ENCODE measurements at regions of chr1 and their contacts with region 1.

Region 1: DNA sequence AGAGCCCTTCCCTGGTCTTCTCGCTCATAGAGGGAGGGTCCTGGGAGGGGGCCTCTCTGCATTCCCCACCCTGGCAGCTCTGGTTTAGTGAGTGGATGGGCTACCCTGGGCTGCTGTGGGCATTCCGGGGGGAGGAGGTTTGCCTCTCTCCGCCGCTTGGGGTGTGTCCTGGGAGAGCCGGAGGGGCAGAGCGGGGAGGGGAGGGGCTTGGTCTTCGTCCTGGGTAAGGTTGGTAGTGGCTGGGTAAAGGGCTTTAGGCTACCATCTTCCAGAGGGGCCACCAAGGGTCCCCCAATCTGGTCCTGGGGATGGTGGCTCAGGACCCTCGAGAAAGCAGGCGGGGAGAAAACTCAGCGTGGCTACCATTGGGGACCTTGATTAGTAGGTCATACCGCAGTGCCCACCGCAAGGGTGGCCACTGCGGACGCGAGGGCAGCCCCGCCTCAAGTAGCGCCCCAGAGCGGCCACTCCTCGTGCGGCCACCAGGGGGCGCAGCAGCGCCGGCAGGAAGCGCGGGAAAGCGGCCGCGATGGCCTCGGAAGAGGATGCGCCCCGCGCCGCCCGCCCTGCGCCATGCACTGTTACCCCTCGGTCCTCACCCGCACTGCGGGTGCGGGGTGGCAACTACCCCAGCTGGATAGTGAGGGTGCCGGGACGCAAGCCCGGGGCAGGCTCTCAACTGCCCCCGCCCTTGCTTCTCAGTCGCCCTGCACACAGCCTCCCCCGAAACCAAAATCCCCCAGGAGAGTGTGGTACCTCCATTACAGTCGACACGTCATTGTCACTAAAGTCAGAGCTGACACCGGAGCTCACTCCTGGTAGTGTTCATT is 44.1 kb upstream of the SLC25A33 start:
- DNase-seq: peak; percentile 44 to 72 (median 57)
- H3K4me3 ChIP-seq: peak overlapping the region; percentile 16
- H3K4me3 Mint-ChIP-seq: peak overlapping the region in 6 of 7 donors; percentile 47 to 78 (median 72)
- H3K27ac ChIP-seq: no peak overlapping the region
- H3K27ac Mint-ChIP-seq: no peak overlapping the region
- H3K4me1 ChIP-seq: no peaks in the 10 kb centered on the region
- H3K4me1 Mint-ChIP-seq: peaks cover 2 to 10% (median 7%) of the 10 kb centered on the region in 3 donors
- H3K27me3 ChIP-seq: peaks cover 4% of the 10 kb centered on the region
- H3K27me3 Mint-ChIP-seq: peaks cover 7 to 23% of the 10 kb centered on the region in 2 donors

Region 2: DNA sequence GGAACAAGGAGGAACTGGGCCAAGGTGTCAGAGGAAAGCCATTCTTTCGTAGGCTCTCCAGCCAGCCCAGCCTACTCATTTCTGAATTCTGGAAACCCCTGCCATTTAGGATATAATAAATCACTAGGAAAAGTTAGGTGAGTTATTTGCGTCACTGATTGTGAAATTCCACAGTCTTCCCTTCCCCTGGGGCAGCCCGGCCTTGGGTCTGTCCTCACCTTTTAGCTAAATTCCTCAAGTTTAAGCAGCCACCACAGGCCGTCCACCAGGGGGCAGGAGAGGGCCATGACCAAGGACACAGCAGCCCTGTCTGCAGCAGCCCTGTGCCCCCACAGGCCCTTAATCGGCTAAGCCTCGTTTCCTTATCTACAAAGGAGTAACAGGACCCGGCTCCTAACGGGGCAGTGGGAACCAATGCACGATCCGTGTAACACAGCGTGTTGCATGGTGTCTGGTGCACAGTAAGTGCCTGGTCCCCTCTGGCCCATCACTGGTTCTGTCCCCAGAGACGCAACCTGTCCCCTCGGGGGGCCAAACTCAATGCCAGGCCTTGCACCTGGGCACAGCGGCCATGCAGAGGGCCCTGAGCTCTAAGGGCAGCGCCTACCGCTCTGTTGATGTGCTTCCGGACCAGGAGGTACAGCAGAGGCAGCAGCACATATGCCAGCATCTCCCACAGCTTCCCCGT is 384.3 kb before region 1 on chr1:
- CTCF ChIA-PET with region 1: interaction called, 12 read pairs
- POLR2A ChIA-PET with region 1: no interaction called
- DNase-seq: peak; percentile 64 to 87 (median 70)
- H3K4me3 ChIP-seq: no peak overlapping the region
- H3K4me3 Mint-ChIP-seq: no peak overlapping the region
- H3K27ac ChIP-seq: no peak overlapping the region
- H3K27ac Mint-ChIP-seq: peak overlapping the region in 1 of 8 donors; percentile 57
- H3K4me1 ChIP-seq: no peaks in the 10 kb centered on the region
- H3K4me1 Mint-ChIP-seq: peaks cover 0 to 5% (median 3%) of the 10 kb centered on the region in 3 donors
- H3K27me3 ChIP-seq: no peaks in the 10 kb centered on the region
- H3K27me3 Mint-ChIP-seq: no peaks in the 10 kb centered on the region

Region 3: GRCh38 chr1:9181176-9181906 is 313.8 kb before region 1 on chr1:
- CTCF ChIA-PET with region 1: interaction called, 12 read pairs
- POLR2A ChIA-PET with region 1: no interaction called
- DNase-seq: peak; percentile 34 to 69 (median 60)
- H3K4me3 ChIP-seq: peak overlapping the region; percentile 47
- H3K4me3 Mint-ChIP-seq: peak overlapping the region; percentile 54 to 82 (median 71)
- H3K27ac ChIP-seq: no peak overlapping the region
- H3K27ac Mint-ChIP-seq: peak overlapping the region in 1 of 8 donors; percentile 51
- H3K4me1 ChIP-seq: peaks cover 6% of the 10 kb centered on the region
- H3K4me1 Mint-ChIP-seq: peaks cover 6 to 8% (median 7%) of the 10 kb centered on the region in 3 donors
- H3K27me3 ChIP-seq: peaks cover 13% of the 10 kb centered on the region
- H3K27me3 Mint-ChIP-seq: peaks cover 18 to 43% of the 10 kb centered on the region in 2 donors

Region 4: GRCh38 chr1:9267352-9267686 is 227.8 kb before region 1 on chr1:
- CTCF ChIA-PET with region 1: interaction called, 15 read pairs
- POLR2A ChIA-PET with region 1: no interaction called
- DNase-seq: no peak
- H3K4me3 ChIP-seq: no peak overlapping the region
- H3K4me3 Mint-ChIP-seq: no peak overlapping the region
- H3K27ac ChIP-seq: no peak overlapping the region
- H3K27ac Mint-ChIP-seq: no peak overlapping the region
- H3K4me1 ChIP-seq: no peaks in the 10 kb centered on the region
- H3K4me1 Mint-ChIP-seq: peaks cover 0 to 8% (median 4%) of the 10 kb centered on the region in 3 donors
- H3K27me3 ChIP-seq: no peaks in the 10 kb centered on the region
- H3K27me3 Mint-ChIP-seq: no peaks in the 10 kb centered on the region

Region 5: GRCh38 chr1:9292361-9293240 is 202.5 kb before region 1 on chr1 and contains the start of gene SPSB1:
- CTCF ChIA-PET with region 1: interaction called, 54 read pairs
- POLR2A ChIA-PET with region 1: interaction called, 3 read pairs
- DNase-seq: peak; percentile 36 to 70 (median 51)
- H3K4me3 ChIP-seq: peak within 1 kb of the TSS; percentile 66
- H3K4me3 Mint-ChIP-seq: peak within 1 kb of the TSS; percentile 64 to 87 (median 79)
- H3K27ac ChIP-seq: no peak within 1 kb of the TSS
- H3K27ac Mint-ChIP-seq: peak within 1 kb of the TSS in 2 of 8 donors; percentile 36 to 43
- H3K4me1 ChIP-seq: peaks cover 26% of the 10 kb centered on the region
- H3K4me1 Mint-ChIP-seq: peaks cover 4 to 25% (median 13%) of the 10 kb centered on the region in 3 donors
- H3K27me3 ChIP-seq: no peaks in the 10 kb centered on the region
- H3K27me3 Mint-ChIP-seq: peaks cover 0 to 2% of the 10 kb centered on the region in 2 donors
- total RNA-seq, gene SPSB1: 0.92 to 1.2 TPM

Region 6: GRCh38 chr1:9466780-9467758 is 28.1 kb before region 1 on chr1:
- CTCF ChIA-PET with region 1: no interaction called
- POLR2A ChIA-PET with region 1: no interaction called
- DNase-seq: no peak
- H3K4me3 ChIP-seq: no peak overlapping the region
- H3K4me3 Mint-ChIP-seq: no peak overlapping the region
- H3K27ac ChIP-seq: no peak overlapping the region
- H3K27ac Mint-ChIP-seq: peak overlapping the region in 2 of 8 donors; percentile 21 to 69
- H3K4me1 ChIP-seq: no peaks in the 10 kb centered on the region
- H3K4me1 Mint-ChIP-seq: no peaks in the 10 kb centered on the region
- H3K27me3 ChIP-seq: no peaks in the 10 kb centered on the region
- H3K27me3 Mint-ChIP-seq: peaks cover 8 to 39% of the 10 kb centered on the region in 2 donors

Region 7: GRCh38 chr1:9481048-9481447 is 14.1 kb before region 1 on chr1:
- CTCF ChIA-PET with region 1: interaction called, 13 read pairs
- POLR2A ChIA-PET with region 1: no interaction called
- DNase-seq: no peak
- H3K4me3 ChIP-seq: no peak overlapping the region
- H3K4me3 Mint-ChIP-seq: no peak overlapping the region
- H3K27ac ChIP-seq: no peak overlapping the region
- H3K27ac Mint-ChIP-seq: no peak overlapping the region
- H3K4me1 ChIP-seq: no peaks in the 10 kb centered on the region
- H3K4me1 Mint-ChIP-seq: no peaks in the 10 kb centered on the region
- H3K27me3 ChIP-seq: no peaks in the 10 kb centered on the region
- H3K27me3 Mint-ChIP-seq: peaks cover 8 to 21% of the 10 kb centered on the region in 2 donors

Region 8: DNA sequence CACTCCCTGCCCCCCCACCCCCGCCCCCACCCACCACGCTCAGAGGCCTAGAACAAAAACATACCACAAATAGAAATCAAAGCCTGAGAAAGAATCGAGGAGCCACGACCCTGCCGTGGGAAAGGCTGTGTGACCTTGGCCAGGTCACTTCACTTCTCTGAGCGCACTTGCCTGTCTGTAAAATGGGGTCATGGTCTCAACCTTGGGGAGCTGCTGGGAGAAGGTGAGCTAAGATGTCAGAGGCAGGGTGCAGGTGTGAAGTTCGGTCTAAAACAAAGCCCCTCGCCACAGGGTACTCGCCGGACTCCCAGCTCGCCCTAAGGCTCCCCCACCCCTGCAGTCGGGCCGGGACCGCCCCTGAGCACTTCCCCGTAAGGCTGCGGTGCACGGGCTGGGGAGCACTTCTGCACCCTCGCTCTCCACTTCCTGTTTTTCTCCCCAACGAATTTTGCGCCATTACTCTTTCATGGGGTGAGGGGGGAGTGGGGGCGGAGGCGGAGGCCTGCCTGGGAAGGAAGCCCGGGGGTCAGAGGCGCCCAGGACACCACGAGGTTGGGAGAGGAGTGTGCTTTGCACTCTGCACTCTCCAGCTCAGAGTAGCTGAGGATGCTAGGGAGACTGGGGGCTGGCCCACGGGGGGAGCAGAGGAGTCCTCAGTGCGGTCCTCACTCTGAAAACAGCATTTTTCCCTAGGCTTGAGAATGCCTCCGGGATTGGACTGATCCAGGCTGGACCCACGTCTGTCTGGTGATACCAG is 134.5 kb after region 1 on chr1:
- CTCF ChIA-PET with region 1: no interaction called
- POLR2A ChIA-PET with region 1: no interaction called
- DNase-seq: peak; percentile 59 to 89 (median 75)
- H3K4me3 ChIP-seq: peak overlapping the region; percentile 94
- H3K4me3 Mint-ChIP-seq: peak overlapping the region; percentile 89 to 98 (median 97)
- H3K27ac ChIP-seq: peak overlapping the region; percentile 76
- H3K27ac Mint-ChIP-seq: peak overlapping the region; percentile 87 to 98 (median 93)
- H3K4me1 ChIP-seq: peaks cover 59% of the 10 kb centered on the region
- H3K4me1 Mint-ChIP-seq: peaks cover 46 to 81% (median 71%) of the 10 kb centered on the region in 3 donors
- H3K27me3 ChIP-seq: no peaks in the 10 kb centered on the region
- H3K27me3 Mint-ChIP-seq: no peaks in the 10 kb centered on the region

Region 9: DNA sequence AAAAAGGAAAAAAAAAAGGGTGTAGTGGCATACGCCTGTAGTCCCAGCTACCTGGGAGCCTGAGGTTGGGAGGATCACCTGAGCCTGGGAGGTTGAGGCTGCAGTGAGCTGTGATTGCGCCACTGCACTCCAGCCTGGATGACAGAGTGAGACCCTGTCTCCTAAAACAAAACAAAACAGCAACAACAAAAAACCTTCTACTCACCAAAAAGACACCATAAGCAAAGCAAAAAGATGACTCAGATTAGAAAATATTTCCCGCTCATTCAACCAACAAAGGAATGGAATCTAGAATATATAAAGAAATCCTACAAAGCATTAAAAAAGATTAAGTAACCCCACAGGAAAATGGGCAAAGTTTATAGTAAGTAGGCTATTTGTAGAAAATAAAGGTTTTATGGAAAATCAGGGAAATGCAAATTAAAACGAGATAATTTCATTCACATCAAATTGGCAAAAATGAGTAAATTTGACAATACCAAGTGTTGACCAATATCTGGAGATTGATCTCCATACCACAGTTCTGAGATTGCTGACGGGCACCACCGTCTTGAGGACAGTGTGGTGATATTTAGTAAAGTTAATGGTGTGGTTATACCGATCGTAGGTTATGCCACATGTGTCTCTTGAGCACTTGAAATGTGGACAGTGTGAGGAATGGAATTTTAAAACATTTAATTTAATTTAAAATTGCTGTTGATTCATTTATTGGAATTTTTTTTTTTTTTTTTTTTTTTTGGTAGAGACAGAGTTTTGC is 210.4 kb after region 1 on chr1:
- CTCF ChIA-PET with region 1: no interaction called
- POLR2A ChIA-PET with region 1: no interaction called
- DNase-seq: no peak
- H3K4me3 ChIP-seq: no peak overlapping the region
- H3K4me3 Mint-ChIP-seq: peak overlapping the region in 6 of 7 donors; percentile 21 to 73 (median 52)
- H3K27ac ChIP-seq: no peak overlapping the region
- H3K27ac Mint-ChIP-seq: peak overlapping the region; percentile 20 to 93 (median 79)
- H3K4me1 ChIP-seq: peaks cover 46% of the 10 kb centered on the region
- H3K4me1 Mint-ChIP-seq: peaks cover 62 to 80% (median 65%) of the 10 kb centered on the region in 3 donors
- H3K27me3 ChIP-seq: no peaks in the 10 kb centered on the region
- H3K27me3 Mint-ChIP-seq: no peaks in the 10 kb centered on the region

Measured in CD8-positive, alpha-beta memory T cell (primary cell).